Dendritic cell treated with granulocyte-macrophage colony-stimulating factor and Interleukin-4, amounts not matched to agents 40 ng/mL and 50 ng/mL, for 4 days (primary cell): ENCODE measurements at regions of chr15 and their contacts with region 1.

Region 1: DNA sequence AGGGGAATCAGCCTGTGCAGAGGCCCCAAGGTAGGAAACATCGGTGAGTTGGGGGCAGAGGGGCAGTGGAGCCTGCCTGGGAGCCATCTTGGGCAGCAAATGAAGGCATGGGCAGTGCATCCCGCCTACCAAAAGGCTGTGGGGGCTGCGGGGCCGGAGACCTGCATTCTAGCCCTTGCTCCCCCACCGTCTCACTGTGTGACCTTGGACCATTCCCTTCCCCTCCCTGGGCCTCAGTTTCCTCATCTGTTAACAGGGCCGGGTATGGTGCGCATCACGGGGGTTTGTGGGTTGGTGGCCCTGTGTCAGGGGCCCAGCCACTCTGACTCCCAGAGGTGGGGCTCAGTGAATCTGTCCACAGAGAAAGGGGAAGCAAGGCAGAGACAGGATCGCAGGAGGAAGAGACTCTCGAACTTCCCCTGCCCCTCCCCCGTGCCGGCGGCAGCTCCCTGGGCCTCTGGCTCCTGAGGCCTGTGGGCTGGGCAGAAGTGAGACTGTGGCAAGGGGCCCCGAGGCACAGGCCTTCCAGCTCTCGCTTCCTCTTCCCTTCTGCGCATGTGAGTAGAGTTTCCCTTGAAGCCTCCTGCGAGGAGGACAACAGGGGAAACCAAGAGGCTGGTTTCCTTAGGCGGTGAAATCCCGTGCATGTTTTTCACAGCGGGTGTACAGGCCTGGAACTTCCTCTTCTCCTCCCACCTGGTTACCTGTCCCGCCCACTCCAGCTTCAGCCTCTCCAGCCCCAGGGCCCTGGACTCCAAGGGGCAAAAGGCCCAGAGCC is 42.9 kb downstream of the IDH2 start:
- H3K4me3 Mint-ChIP-seq: peak overlapping the region; percentile 28
- H3K27ac Mint-ChIP-seq: peak overlapping the region; percentile 93
- H3K4me1 Mint-ChIP-seq: peaks cover 85% of the 10 kb centered on the region
- H3K27me3 Mint-ChIP-seq: no peaks in the 10 kb centered on the region

Region 2: GRCh38 chr15:89587952-89588351 is 471.4 kb before region 1 on chr15:
- intact Hi-C with region 1: no loop called
- H3K4me3 Mint-ChIP-seq: no peak overlapping the region
- H3K27ac Mint-ChIP-seq: no peak overlapping the region
- H3K4me1 Mint-ChIP-seq: no peaks in the 10 kb centered on the region
- H3K27me3 Mint-ChIP-seq: no peaks in the 10 kb centered on the region

Region 3: GRCh38 chr15:90037961-90038631 is 21.3 kb before region 1 on chr15:
- intact Hi-C with region 1: loop called (anchors 2 kb)
- H3K4me3 Mint-ChIP-seq: no peak overlapping the region
- H3K27ac Mint-ChIP-seq: peak overlapping the region; percentile 88
- H3K4me1 Mint-ChIP-seq: peaks cover 95% of the 10 kb centered on the region
- H3K27me3 Mint-ChIP-seq: no peaks in the 10 kb centered on the region